Activated CD8-positive, alpha-beta T cell treated with anti-CD3 and anti-CD28 coated beads, Interleukin-2, amount 10 ng/mL, durations not matched to agents 7 days and 5 days (primary cell): ENCODE measurements at regions of chr5 and their contacts with region 1.

Region 1: DNA sequence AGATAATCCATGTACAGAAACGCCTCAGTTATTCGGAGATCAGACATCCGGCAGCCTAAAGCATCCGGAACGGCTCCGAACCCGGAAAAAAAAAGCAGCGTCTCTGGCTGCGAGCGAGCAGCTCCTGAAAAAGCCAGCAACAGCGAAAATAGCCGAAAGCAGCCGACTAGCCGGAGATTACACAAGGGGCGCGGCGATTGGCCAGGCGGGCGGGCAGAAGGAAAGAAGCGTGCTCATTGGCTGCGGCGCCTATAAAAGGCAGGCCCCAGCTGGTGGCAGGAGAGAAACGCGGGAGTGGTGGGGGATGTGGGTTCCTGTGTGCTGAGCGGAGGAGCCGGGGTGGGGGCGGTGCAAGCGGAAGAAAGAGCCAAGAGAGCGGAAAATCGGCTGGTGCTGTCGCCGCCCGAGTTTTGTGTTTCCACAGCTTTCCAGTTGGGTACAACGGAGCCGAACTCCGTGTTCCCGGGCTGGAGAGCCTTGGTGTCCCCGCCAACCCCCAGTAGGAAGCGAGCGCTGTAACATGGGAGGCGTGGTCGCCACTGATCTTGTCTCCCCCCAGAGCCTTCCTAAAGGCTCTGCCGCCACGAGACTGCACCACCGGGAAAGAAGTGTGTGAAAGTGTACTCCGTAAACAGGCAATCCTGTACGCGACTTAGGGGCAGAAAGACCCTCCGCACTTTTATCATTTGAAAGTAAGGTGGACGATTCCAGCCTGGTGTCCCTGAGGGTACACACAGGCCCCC is at the start of gene ARL15:
- DNase-seq: peak; percentile 99
- ATAC-seq: peak; percentile 94
- H3K4me3 Mint-ChIP-seq: peak within 1 kb of the TSS; percentile 91
- H3K27ac Mint-ChIP-seq: peak within 1 kb of the TSS; percentile 92
- H3K4me1 Mint-ChIP-seq: peaks cover 20% of the 10 kb centered on the region
- H3K27me3 Mint-ChIP-seq: peaks cover 19% of the 10 kb centered on the region
- total RNA-seq, gene ARL15: 10.6 to 12.3 TPM

Region 2: DNA sequence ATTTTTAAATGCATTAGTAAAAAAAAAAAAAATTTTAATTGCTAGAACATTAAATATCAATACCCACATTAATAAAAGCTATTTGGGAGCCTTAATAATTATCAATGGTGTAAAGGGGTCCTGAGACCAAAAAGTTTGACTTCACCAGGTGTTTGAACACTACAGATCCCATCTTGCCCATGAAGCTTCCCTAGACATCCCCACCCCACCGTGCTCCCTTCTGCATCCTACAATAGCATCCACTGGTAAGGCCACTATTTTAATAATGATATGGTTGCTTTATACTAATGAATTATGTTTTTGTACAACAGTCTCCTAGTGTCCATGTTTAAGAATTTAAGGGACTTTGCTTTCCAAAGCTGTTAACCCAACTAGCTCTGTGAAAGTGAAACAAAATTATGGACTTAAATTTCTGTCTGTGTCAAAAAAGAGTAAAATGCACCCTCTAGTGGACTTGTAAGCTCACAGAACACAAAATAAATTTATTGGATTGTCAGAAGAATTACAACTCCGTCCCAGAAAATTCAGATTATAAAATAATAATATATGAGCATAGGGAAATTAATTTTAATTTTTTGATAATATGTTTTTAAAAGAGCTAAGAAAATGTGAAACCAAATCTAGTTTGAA is 76.2 kb before region 1 on chr5:
- CTCF ChIA-PET with region 1: interaction called, 11 read pairs
- POLR2A ChIA-PET with region 1: no interaction called
- DNase-seq: no peak
- ATAC-seq: no peak
- H3K4me3 Mint-ChIP-seq: peak overlapping the region; percentile 32
- H3K27ac Mint-ChIP-seq: no peak overlapping the region
- H3K4me1 Mint-ChIP-seq: peaks cover 3% of the 10 kb centered on the region
- H3K27me3 Mint-ChIP-seq: no peaks in the 10 kb centered on the region

Region 3: DNA sequence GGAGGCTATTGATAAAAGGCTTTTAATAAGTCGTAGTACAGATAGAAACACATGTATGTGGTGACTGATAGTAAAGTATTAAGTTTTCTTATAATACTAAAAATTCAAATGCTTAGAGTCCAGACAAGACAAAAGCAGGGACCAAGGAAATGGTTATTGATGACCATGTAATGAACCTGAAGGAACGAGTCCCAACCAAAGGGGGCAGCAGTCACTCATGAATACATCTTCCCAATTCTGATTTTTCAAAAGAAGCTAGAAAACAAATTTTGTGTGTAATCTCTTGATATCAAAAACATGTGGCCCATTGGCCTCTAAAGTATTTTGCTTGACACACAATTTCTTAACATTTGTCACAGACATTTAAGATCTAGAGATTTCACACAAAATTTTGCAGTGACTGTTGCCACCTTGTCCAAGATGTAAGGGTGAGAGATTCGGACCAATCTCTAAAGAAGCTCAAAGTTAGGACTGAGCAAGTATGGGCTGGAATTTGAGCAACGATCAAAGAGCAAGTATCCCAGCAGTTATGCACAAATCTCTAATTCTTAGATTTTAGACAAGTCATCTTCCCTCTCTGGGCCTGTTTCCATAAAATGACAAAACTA is 67.0 kb before region 1 on chr5:
- CTCF ChIA-PET with region 1: interaction called, 13 read pairs
- POLR2A ChIA-PET with region 1: no interaction called
- DNase-seq: peak; percentile 56
- ATAC-seq: no peak
- H3K4me3 Mint-ChIP-seq: no peak overlapping the region
- H3K27ac Mint-ChIP-seq: no peak overlapping the region
- H3K4me1 Mint-ChIP-seq: peaks cover 3% of the 10 kb centered on the region
- H3K27me3 Mint-ChIP-seq: peaks cover 6% of the 10 kb centered on the region

Region 4: DNA sequence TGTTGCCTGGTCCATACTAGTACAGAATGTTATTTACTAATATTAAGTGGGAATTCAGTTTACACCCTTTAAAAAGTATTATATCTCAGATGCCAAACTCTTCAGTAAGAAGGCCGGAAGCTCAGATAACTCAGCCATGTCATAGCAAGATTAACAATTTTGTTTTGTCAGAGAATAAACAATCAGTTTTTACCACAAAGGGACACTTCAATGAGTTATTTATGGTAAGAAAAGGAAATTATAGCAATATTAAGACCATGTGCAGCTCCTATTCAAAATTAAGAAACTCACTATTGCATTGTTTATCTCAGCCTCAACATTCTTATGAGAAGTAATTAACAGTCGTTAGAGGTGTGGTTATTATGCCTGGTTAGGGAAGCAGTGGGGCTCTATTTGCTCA is 12.9 kb after region 1 on chr5:
- CTCF ChIA-PET with region 1: interaction called, 6 read pairs
- POLR2A ChIA-PET with region 1: interaction called, 12 read pairs
- DNase-seq: no peak
- ATAC-seq: no peak
- H3K4me3 Mint-ChIP-seq: no peak overlapping the region
- H3K27ac Mint-ChIP-seq: no peak overlapping the region
- H3K4me1 Mint-ChIP-seq: peaks cover 13% of the 10 kb centered on the region
- H3K27me3 Mint-ChIP-seq: peaks cover 28% of the 10 kb centered on the region

Region 5: GRCh38 chr5:54415896-54416601 is 105.4 kb after region 1 on chr5:
- CTCF ChIA-PET with region 1: interaction called, 13 read pairs
- POLR2A ChIA-PET with region 1: no interaction called
- DNase-seq: no peak
- ATAC-seq: no peak
- H3K4me3 Mint-ChIP-seq: no peak overlapping the region
- H3K27ac Mint-ChIP-seq: no peak overlapping the region
- H3K4me1 Mint-ChIP-seq: no peaks in the 10 kb centered on the region
- H3K27me3 Mint-ChIP-seq: peaks cover 17% of the 10 kb centered on the region